ENCODE measurements at regions of chr7 and their contacts with region 1.

Region 1: GRCh38 chr7:149460493-149461277 is at the start of gene ZNF777:
- DNase-seq: peak; percentile 61 to 91 (median 80)
- ATAC-seq: peak; percentile 98 to 99
- H3K4me3 Mint-ChIP-seq: peak within 1 kb of the TSS; percentile 74 to 93 (median 87)
- H3K27ac Mint-ChIP-seq: peak within 1 kb of the TSS; percentile 71 to 92 (median 88)
- H3K4me1 Mint-ChIP-seq: peaks cover 17 to 41% (median 32%) of the 10 kb centered on the region in 4 donors
- H3K27me3 Mint-ChIP-seq: peaks cover 0 to 15% (median 6%) of the 10 kb centered on the region in 5 donors
- polyA plus RNA-seq, gene ZNF777: 1.1 to 3.6 (median 1.9) TPM

Region 2: GRCh38 chr7:149261829-149262617 is 198.7 kb before region 1 on chr7 and contains the start of gene ZNF783:
- POLR2A ChIA-PET with region 1: interaction called, 20 read pairs
- DNase-seq: peak; percentile 78 to 90 (median 84)
- ATAC-seq: peak; percentile 92 to 94
- H3K4me3 Mint-ChIP-seq: peak within 1 kb of the TSS; percentile 82 to 92 (median 86)
- H3K27ac Mint-ChIP-seq: peak within 1 kb of the TSS; percentile 83 to 95 (median 92)
- H3K4me1 Mint-ChIP-seq: peaks cover 21 to 42% (median 34%) of the 10 kb centered on the region in 4 donors
- H3K27me3 Mint-ChIP-seq: no peaks in the 10 kb centered on the region
- polyA plus RNA-seq, gene ZNF783: 3.6 to 9.0 (median 6.3) TPM

Region 3: DNA sequence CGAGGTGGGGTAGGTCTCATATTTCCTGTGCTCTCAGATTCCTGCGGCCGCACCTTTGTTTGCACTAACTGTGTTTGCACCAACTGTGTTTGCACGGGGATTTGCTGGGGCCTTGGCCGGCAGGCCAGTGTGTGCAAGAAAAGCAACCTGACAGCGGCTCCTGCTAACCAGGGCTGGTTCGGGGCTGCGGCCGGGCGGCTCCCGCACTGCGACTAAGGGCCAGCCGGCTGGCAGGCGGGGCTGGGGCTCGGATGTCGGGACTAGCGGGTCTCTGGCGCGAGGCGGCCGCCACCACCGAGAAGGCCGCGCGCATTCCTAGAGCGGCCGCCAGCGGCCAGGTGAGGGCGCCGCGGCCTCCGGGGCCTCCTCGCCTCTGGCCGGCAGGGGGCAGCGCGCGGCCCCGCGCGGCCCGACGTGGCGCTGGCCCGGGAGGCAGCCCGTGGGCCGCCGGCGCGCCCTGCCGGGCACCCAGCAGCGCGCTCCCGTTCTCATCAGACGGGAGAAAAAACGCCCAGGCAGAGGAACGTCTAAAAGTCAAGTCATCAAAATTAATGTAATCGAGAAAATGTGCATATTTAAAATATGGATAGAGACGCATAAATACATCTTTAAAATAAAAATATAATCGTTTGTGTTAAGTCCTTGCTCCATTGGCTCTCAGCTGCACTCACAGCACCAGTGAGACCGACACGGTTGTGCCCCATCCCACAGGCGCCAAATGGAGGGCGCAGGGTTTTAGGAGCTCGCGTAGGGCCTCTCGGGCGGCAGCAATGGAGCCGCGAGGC is 38.4 kb before region 1 on chr7:
- POLR2A ChIA-PET with region 1: interaction called, 21 read pairs
- DNase-seq: peak; percentile 52 to 80 (median 73)
- ATAC-seq: peak; percentile 94 to 96
- H3K4me3 Mint-ChIP-seq: peak overlapping the region; percentile 73 to 85 (median 77)
- H3K27ac Mint-ChIP-seq: peak overlapping the region; percentile 79 to 90 (median 83)
- H3K4me1 Mint-ChIP-seq: peaks cover 0 to 15% (median 6%) of the 10 kb centered on the region in 4 donors
- H3K27me3 Mint-ChIP-seq: no peaks in the 10 kb centered on the region

Region 4: DNA sequence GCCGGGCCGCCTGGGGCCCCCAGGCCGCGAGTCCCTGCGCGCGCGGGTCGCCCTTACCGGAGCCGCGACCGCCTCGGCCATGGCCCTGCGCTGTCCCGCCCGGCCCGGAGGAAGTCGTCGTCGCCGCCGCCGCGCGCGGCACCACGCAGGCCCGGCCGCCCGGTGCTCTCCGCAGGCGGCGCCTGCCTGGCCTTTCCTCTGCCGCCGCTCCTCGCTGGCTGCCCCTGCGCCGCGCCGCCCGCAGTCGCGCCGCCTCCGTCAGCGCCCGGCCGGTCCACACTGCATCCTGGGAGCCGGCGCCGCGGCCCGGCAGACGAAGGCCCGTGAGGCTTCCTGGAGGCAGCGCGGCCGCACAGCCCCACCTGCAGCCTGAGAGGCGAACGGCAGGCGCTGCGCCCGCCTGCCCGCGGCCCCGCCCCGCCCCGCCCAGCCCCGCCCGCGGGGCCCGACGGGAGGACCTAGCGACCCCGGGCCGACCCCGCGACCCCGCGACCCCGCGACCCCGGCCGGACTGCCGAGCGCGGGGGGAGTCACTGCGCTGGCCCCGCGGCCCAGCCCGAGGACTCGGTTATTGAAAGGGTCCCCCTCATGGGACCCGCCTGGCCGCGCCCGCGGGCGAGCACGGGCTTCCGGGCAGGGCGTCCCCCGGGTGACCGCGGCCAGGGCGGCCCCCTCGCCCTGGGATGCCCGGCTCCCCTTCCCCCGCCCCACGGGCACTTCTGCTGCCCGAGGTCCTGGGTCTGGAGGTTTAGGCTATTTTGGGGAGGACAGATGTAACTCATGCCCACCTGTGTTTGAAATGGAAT is 37.0 kb after region 1 on chr7 and contains the start of gene ZNF746:
- POLR2A ChIA-PET with region 1: interaction called, 13 read pairs
- DNase-seq: peak; percentile 68 to 86 (median 76)
- ATAC-seq: peak; percentile 90 to 91
- H3K4me3 Mint-ChIP-seq: peak within 1 kb of the TSS; percentile 91 to 99 (median 96)
- H3K27ac Mint-ChIP-seq: peak within 1 kb of the TSS; percentile 86 to 98 (median 94)
- H3K4me1 Mint-ChIP-seq: peaks cover 16 to 40% (median 34%) of the 10 kb centered on the region in 4 donors
- H3K27me3 Mint-ChIP-seq: no peaks in the 10 kb centered on the region
- polyA plus RNA-seq, gene ZNF746: 5.9 to 10.9 (median 7.2) TPM

Measured in naive thymus-derived CD8-positive, alpha-beta T cell (primary cell).